Activated T-helper 1 cell treated with anti-CD3 and anti-CD28 coated beads, Interleukin-12 subunit alpha, Interleukin-12 subunit beta, Interleukin-2, Interleukin-4 antibody, amounts not matched to agents 30 ng/mL and 10 ng/mL and 1 ng/mL, durations not matched to agents 14 hours and 24 hours and 36 hours (primary cell): ENCODE measurements at regions of chr1 and their contacts with region 1.

Region 1: DNA sequence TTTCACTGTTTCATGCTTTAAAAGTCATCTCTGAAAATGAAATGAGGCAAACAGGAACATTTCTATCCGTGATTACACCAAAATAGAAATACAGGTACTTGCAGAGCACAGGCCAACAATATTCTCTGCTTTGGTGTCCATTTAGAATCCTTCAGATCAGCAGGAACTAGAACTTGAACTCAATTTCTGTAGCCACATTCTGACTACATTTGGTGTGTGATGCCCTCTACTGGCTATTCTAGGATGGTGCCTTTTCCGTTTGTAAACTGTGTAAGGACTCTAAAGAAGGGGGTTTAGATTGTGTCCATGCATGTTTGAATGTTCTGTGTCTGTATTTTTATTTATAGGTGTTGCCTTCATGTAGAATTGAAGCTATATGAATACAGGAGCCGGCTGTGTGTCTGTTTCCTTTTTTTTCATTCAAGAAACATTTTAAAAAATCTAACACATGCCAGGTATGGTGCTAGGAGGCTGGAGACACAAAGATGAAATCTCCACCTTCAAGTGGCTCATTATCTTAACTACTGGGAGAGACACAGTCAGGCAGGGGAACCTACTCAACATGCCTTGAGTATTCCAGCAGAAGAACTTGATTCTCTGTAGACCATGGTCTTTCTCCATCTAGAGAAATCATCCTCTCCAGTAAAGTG is 7.6 kb upstream of the ZNF326 start:
- DNase-seq: peak; percentile 54
- H3K4me3 Mint-ChIP-seq: no peak overlapping the region
- H3K27ac Mint-ChIP-seq: no peak overlapping the region
- H3K4me1 Mint-ChIP-seq: peaks cover 11% of the 10 kb centered on the region
- H3K27me3 Mint-ChIP-seq: peaks cover 7% of the 10 kb centered on the region

Region 2: DNA sequence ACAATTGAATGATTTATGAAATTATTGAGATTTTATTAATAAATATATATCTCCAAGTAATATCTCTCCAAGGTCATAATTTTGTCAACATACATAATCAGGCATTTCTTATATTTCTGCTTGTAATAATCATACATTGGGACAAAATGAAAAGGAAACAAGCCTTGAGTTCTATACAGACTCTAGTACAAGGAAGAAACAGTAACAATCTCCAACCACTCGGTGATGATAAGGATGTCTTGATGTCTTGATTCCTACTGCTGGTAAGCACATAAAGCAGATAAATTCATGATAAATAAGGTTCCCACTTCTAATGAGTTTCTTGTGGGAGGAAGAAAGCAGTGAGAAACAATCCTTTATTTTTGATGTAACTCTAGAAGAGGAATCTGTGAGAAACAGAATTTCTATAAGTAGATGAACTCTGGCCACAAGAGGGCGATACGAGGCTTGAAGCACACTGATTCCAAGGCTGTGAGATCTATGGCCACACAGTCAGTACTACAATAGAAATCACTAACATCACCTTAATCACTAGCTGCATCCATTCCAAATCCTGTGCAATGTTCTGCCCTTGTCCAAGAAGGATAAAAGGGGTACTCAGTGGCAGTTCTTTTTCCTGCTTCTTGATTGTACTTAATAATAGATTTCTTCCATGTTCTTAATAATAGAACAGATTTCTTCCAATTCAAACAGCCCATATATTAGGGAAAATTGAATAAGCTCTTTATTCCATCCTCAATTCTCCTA is 504.1 kb before region 1 on chr1:
- intact Hi-C with region 1: loop called (anchors 1 kb)
- DNase-seq: peak; percentile 58
- H3K4me3 Mint-ChIP-seq: no peak overlapping the region
- H3K27ac Mint-ChIP-seq: no peak overlapping the region
- H3K4me1 Mint-ChIP-seq: peaks cover 25% of the 10 kb centered on the region
- H3K27me3 Mint-ChIP-seq: peaks cover 2% of the 10 kb centered on the region

Region 3: GRCh38 chr1:89598450-89599331 is 388.6 kb before region 1 on chr1:
- intact Hi-C with region 1: loop called (anchors 1 kb)
- DNase-seq: no peak
- H3K4me3 Mint-ChIP-seq: no peak overlapping the region
- H3K27ac Mint-ChIP-seq: peak overlapping the region; percentile 50
- H3K4me1 Mint-ChIP-seq: peaks cover 85% of the 10 kb centered on the region
- H3K27me3 Mint-ChIP-seq: no peaks in the 10 kb centered on the region

Region 4: DNA sequence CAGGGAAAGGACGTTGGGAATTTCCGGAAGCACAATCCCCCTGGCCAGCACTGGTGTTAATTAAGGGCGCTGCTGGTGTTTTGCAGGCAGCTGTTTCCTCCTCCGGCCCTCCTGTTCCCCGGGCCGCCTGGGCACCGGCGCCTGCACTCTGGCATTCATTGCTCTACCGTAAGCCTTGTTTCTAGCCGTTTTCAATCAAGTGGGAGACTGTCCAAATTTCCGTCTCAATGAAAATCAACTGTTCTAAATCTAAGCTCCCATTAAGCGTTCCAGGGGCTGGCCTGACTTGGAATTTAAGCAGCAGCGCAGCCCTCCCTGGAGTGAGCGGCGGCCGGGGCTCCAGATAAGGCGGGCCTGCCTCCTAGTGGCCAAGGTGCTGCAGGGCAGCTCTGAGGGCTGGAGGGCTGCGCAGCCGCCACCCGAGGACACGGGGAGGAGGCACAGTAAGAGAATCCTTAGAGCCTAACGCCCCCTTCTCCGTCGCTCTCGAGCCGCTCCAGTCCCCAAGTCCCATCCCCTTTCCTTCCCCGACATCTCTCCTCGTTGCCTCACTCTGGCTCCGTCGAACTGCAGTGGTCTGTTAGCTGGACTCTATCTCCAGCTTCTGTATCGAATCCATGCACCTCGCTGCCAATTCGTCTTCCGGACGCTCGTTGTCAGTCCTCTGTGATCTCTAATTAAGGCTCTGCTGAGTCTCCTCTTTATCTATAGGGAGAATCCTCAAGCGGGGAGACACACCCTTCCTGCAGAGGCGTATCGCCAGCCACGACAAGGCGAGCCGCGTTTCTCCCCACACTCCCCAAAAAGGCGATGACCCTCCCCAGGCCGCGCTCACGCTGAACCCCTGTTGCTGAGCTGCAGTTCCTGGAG is 224.3 kb before region 1 on chr1:
- intact Hi-C with region 1: loop called (anchors 1 kb)
- DNase-seq: peak; percentile 78
- H3K4me3 Mint-ChIP-seq: peak overlapping the region; percentile 92
- H3K27ac Mint-ChIP-seq: peak overlapping the region; percentile 93
- H3K4me1 Mint-ChIP-seq: peaks cover 63% of the 10 kb centered on the region
- H3K27me3 Mint-ChIP-seq: no peaks in the 10 kb centered on the region

Region 5: GRCh38 chr1:89804642-89805237 is 182.6 kb before region 1 on chr1:
- intact Hi-C with region 1: loop called (anchors 1 kb)
- DNase-seq: peak; percentile 71
- H3K4me3 Mint-ChIP-seq: no peak overlapping the region
- H3K27ac Mint-ChIP-seq: no peak overlapping the region
- H3K4me1 Mint-ChIP-seq: peaks cover 7% of the 10 kb centered on the region
- H3K27me3 Mint-ChIP-seq: peaks cover 4% of the 10 kb centered on the region

Region 6: GRCh38 chr1:89820422-89821321 is 166.6 kb before region 1 on chr1 and contains the start of gene LRRC8D:
- intact Hi-C with region 1: loop called (anchors 1 kb)
- DNase-seq: peak; percentile 72
- H3K4me3 Mint-ChIP-seq: peak within 1 kb of the TSS; percentile 84
- H3K27ac Mint-ChIP-seq: peak within 1 kb of the TSS; percentile 68
- H3K4me1 Mint-ChIP-seq: peaks cover 15% of the 10 kb centered on the region
- H3K27me3 Mint-ChIP-seq: peaks cover 8% of the 10 kb centered on the region
- total RNA-seq, gene LRRC8D: 43.3 and 45.0 TPM in 2 replicates